ENCODE measurements at regions of chr4 and their contacts with region 1.

Region 1: GRCh38 chr4:77156533-77156911 is 485 bp upstream of the CCNG2 start:
- H3K4me3 ChIP-seq: peak overlapping the region; percentile 92
- H3K27ac ChIP-seq: peak overlapping the region; percentile 97
- H3K4me1 ChIP-seq: no peaks in the 10 kb centered on the region
- CTCF ChIP-seq: no peak

Region 2: GRCh38 chr4:77075869-77076799 is 80.4 kb before region 1 on chr4 and contains the start of gene CCNI:
- CTCF ChIA-PET with region 1: interaction called, 3 read pairs
- POLR2A ChIA-PET with region 1: interaction called, 19 read pairs
- H3K4me3 ChIP-seq: peak within 1 kb of the TSS; percentile 93
- H3K27ac ChIP-seq: peak within 1 kb of the TSS; percentile 93
- H3K4me1 ChIP-seq: no peaks in the 10 kb centered on the region
- CTCF ChIP-seq: no peak

Region 3: GRCh38 chr4:77418333-77419038 is 262.0 kb after region 1 on chr4:
- CTCF ChIA-PET with region 1: no interaction called
- POLR2A ChIA-PET with region 1: no interaction called
- H3K4me3 ChIP-seq: no peak overlapping the region
- H3K27ac ChIP-seq: no peak overlapping the region
- H3K4me1 ChIP-seq: 0 out of 2 replicates have a peak, but pooled peaks cover 4% of the 10 kb centered on the region
- CTCF ChIP-seq: no peak

Region 4: DNA sequence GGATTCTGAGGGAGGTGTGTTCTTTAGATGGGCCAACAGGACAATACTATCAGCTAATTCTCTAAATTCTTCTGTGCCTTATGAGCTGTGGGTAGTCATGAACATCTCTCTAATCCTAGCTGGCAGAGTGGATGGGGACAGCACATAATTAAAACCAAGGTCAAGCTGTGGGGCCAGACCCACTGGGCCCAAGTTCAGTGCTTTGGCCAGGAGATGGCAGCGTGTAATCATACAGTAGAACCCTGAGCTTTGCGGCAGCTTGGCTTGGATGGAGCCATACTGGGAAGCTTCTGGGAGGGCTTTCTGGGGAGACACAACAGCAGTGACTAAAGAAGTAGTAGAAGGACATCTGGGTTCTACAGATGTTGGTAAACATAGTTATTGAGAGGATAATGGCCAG is 308.7 kb after region 1 on chr4:
- CTCF ChIA-PET with region 1: no interaction called
- POLR2A ChIA-PET with region 1: no interaction called
- H3K4me3 ChIP-seq: no peak overlapping the region
- H3K27ac ChIP-seq: no peak overlapping the region
- H3K4me1 ChIP-seq: no peaks in the 10 kb centered on the region
- CTCF ChIP-seq: 0 out of 2 replicates have a peak, but pooled peaks have one; percentile 15